ENCODE measurements at regions of chr5 and their contacts with region 1.

Region 1: DNA sequence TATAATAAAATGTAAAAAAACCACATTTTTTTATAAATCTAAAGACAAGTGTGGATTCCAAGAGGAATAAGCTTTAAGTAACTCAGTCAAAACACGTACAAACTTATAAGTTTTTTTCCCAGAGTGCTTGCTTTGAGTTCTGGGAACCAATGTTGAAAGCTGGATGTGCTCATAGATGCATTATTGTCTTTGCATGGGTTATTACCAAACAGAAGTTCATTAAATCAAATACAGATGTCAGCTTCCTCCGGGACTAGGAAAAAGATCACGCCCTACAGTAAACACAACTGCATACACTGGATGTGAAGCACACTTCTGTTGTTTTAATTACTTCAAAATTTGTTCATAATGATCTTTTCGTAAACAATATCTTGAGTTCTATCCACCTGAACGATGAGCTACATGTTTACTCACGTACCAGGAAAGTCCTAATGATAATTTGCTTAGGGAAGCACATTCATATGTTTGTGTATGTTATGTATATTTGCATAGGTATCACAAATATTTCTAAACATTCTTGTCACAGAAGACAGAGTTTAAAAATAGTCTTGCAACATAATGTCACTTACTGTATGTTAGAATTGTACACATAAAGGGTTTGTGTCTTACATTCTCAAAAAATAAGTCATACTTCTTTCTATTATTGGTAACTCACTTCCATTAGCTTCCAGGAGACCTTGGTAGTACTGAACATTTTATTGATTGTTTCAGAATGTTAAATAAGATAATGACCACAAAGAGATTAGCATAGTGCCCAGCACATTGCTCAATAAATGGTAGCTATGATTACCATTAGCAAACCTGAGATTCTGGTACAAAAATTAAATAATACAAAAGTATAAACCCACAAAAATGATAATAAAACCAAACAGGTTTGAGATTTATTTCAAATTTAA is 427.4 kb downstream of the CETN3 start:
- DNase-seq: no peak

Region 2: DNA sequence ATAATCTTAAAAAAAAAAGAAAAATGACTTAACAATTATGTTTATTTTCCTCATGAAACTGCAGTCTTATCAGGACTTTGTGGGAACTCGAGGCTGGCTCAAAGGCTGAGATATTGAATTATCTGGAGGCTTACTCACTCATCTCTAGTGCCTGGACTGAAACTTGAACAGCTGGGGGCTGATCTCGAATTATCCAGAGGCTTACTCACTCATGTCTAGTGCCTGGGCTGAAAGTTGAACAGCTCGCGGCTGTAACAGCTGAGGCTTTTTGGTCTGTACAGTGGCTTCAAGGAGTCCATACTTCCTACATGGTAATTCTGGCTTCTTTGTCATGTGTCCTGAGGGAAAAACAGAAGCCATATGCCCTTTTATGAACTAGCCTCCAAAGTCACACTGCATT is 55.5 kb after region 1 on chr5:
- intact Hi-C with region 1: loop called in 1 of 2 experiments (anchors 2 kb)
- DNase-seq: no peak

Measured in posterior vena cava (tissue), 2 donors.